Mammary epithelial cell (primary cell): ENCODE measurements at regions of chrX and their contacts with region 1.

Region 1: DNA sequence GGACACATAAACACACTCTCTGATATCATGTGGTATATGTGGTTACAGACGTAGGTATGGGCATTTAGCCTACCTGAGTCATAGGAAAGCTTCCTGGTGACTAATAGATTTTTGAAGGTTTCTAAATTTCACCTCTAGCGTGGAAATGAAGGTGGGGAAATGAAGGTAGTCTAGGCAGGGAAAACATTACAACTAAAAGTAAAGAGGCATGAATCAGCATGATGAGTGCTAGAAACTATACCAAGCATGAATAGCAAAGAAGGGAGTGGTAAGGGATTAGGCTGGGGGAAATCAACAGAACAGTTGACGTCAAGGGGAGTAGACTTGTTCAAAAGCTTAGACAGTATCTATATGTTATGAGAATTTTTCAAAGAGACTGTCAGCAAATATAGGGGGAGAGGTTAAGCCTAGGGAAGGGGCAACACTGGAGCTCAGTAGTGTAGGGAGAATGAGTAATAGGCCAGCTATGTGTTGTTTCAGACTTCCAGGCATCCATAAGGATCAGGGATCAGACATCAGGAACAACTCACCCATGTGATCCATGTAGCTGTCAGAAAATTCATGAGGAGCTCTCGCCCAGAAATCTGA is 279.3 kb upstream of the DIPK2B start:
- DNase-seq: peak; percentile 99
- H3K4me3 ChIP-seq: no peak overlapping the region
- H3K27ac ChIP-seq: peak overlapping the region; percentile 99
- H3K4me1 ChIP-seq: peaks cover 26% of the 10 kb centered on the region
- H3K27me3 ChIP-seq: no peaks in the 10 kb centered on the region
- CTCF ChIP-seq: no peak

Region 2: DNA sequence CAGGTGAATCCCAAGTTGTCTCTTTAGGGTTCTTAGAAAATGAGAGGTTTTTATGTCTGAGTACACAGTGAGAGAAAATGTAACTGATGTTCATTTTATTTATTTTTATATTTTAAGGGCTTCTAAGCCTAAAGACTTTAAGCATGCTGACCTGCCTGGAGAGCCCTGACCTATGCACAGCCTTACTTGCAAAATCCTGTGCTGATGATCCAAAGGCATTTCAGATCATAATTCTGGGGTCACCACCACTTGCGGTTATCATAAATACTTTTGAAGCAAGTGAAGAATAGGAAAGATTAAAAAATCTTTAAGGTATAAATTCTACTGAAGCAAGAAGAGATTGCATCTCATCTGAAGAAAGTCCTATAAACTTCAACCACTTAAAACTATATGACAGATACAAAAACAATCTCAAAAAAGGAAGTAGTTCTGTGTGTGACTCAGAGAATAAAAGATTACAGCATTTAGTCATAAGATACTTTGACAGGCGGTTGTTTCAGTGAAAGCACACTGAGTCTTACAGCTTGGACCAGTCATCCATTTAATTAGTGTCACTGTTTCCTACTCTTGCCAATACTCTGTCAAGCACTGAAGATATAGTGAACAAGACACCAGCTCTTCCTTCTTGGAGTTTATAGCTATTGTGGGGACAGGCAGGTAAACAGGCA is 34.0 kb before region 1 on chrX:
- CTCF ChIA-PET with region 1: no interaction called
- dilution Hi-C with region 1: no loop called
- in situ Hi-C with region 1: no loop called
- intact Hi-C with region 1: loop called (anchors 1 kb)
- DNase-seq: peak; percentile 91
- H3K4me3 ChIP-seq: no peak overlapping the region
- H3K27ac ChIP-seq: peak overlapping the region; percentile 24
- H3K4me1 ChIP-seq: peaks cover 32% of the 10 kb centered on the region
- H3K27me3 ChIP-seq: no peaks in the 10 kb centered on the region
- CTCF ChIP-seq: no peak

Region 3: GRCh38 chrX:45505214-45505613 is 25.3 kb after region 1 on chrX:
- CTCF ChIA-PET with region 1: no interaction called
- dilution Hi-C with region 1: no loop called
- in situ Hi-C with region 1: no loop called
- intact Hi-C with region 1: loop called (anchors 1 kb)
- DNase-seq: peak; percentile 91
- H3K4me3 ChIP-seq: peak overlapping the region in 1 of 3 experiments; percentile 3
- H3K27ac ChIP-seq: peak overlapping the region; percentile 92
- H3K4me1 ChIP-seq: peaks cover 38% of the 10 kb centered on the region
- H3K27me3 ChIP-seq: no peaks in the 10 kb centered on the region
- CTCF ChIP-seq: no peak

Region 4: DNA sequence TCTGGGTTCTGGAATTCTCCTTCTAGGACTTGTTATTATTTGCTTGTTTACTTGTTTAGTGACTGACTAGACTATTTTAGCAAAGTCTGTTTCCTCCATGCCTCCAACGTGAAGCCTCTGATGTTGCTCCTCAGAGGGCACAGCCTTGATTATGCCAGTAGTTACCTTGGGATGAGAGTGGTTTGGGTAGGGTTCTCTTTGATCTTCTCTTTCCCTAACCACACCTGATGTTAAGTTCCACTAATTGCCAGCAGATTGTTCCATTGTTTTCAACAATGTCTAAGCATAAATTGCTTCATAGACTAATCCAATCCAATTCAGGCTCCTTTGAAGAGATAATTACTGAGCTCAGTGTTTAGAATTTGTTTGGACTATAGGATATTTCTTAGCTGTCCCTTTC is 73.5 kb after region 1 on chrX:
- CTCF ChIA-PET with region 1: no interaction called
- dilution Hi-C with region 1: no loop called
- in situ Hi-C with region 1: no loop called
- intact Hi-C with region 1: no loop called
- DNase-seq: no peak
- H3K4me3 ChIP-seq: no peak overlapping the region
- H3K27ac ChIP-seq: no peak overlapping the region
- H3K4me1 ChIP-seq: no peaks in the 10 kb centered on the region
- H3K27me3 ChIP-seq: no peaks in the 10 kb centered on the region
- CTCF ChIP-seq: no peak

Region 5: DNA sequence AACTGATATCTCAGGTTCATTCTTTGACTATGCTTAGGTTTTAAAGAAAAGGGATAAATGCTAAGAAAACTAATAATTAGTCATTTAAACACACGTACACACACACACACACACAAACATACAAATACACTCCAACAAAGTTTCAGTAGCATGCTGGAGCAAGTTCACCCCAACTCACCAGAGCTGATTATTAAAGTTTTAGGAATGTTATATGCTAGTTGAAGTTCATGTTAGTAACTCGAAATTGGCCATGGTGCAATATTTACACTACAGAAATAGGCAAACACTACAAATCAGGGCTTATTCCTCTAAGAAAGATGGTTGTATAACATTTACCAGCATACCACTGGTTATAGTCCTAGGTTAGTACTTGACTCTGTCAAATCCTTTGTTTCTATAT is 104.8 kb after region 1 on chrX:
- CTCF ChIA-PET with region 1: no interaction called
- dilution Hi-C with region 1: loop called (anchors 5 kb)
- in situ Hi-C with region 1: no loop called
- intact Hi-C with region 1: no loop called
- DNase-seq: peak; percentile 84
- H3K4me3 ChIP-seq: no peak overlapping the region
- H3K27ac ChIP-seq: peak overlapping the region; percentile 44
- H3K4me1 ChIP-seq: peaks cover 11% of the 10 kb centered on the region
- H3K27me3 ChIP-seq: no peaks in the 10 kb centered on the region
- CTCF ChIP-seq: no peak